ENCODE measurements at regions of chr5 and their contacts with region 1.

Region 1: GRCh38 chr5:151115274-151115905 is 34.6 kb upstream of the TNIP1 start:
- DNase-seq: peak; percentile 66
- H3K4me3 ChIP-seq: no peak overlapping the region
- H3K27ac ChIP-seq: no peak overlapping the region
- H3K4me1 ChIP-seq: no peaks in the 10 kb centered on the region
- H3K27me3 ChIP-seq: no peaks in the 10 kb centered on the region
- CTCF ChIP-seq: peak; percentile 94

Region 2: DNA sequence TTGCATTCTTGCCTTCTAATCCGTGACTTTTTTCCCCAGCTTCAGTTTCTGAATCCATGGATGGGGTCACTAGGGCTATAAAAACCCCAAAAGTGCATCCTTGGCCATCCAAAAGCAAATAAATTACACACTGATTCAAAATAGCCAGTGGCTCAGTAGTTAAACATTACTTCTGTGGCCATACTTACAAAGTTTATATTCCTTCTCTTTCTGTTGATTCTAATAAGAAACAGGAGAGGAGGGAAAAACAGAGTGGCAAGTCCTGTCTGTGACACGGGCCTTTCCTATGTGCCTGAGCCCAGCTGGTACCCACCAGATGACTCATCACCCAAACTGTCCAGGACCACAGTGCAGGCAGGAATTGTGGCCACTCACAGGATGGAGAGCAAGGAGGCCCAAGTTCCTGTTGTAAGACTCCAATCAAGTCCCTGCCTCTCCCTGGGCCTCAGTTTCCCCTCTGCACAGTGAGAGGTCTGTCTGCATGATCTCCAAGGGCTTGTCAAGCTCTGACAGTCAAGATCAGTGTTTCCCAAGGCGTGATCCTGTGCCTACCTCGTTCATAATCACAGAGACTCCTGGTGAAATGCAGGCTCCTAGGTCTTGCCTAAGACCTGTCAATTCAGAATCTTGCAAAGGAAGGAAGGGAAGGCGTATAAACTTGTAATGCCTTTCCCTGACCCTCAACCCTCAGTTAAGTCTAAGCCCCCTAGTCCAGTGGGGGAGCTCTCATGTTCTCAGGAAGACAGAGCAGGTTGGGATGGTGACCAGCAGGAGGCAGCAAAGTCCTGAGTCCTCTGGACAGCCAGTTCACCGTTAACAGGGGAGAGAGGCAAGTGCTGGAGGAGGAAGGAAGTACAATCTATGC is 64.1 kb before region 1 on chr5:
- CTCF ChIA-PET with region 1: interaction called, 18 read pairs
- POLR2A ChIA-PET with region 1: no interaction called
- intact Hi-C with region 1: loop called (anchors 1 kb)
- DNase-seq: peak; percentile 72
- H3K4me3 ChIP-seq: no peak overlapping the region
- H3K27ac ChIP-seq: no peak overlapping the region
- H3K4me1 ChIP-seq: no peaks in the 10 kb centered on the region
- H3K27me3 ChIP-seq: no peaks in the 10 kb centered on the region
- CTCF ChIP-seq: peak; percentile 83

Region 3: DNA sequence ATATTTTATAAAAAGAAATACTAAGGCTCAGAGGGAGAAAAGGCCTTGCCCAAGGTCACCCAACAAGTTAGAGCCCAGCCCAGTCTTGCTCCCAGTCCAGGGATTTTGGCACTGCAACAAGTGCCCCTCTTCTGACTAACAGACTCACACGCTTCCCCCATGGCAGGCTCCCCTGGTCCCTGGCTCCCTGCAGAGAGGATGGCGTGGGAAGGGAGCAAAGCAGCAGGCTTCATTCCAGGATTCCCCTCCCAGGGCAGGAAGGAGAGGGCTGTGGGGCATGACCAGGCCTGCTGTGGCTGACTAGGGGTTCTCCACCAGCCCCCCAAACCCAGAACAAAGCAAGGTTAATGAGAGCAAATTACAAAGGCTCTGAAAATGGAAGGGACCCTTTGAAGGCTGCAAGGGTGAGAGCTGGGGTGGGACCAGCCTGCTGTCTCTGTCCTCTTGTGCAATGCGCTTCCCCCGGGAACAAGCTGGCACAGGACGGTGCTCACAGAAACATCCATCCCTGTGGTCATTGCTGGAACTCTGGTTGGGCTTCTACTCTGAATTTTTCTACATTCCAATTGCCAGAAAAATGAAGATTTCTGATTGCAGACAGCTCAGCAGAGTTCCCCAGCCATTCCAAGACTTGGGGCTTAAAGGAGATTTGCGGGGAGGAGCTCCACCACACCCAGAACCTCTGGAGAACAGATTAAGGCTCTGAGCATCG is 512.9 kb after region 1 on chr5:
- CTCF ChIA-PET with region 1: no interaction called
- POLR2A ChIA-PET with region 1: no interaction called
- intact Hi-C with region 1: no loop called
- DNase-seq: peak; percentile 48
- H3K4me3 ChIP-seq: no peak overlapping the region
- H3K27ac ChIP-seq: no peak overlapping the region
- H3K4me1 ChIP-seq: peaks cover 6% of the 10 kb centered on the region
- H3K27me3 ChIP-seq: no peaks in the 10 kb centered on the region
- CTCF ChIP-seq: no peak

Measured in A673 (cell line).